Activated CD4-positive, alpha-beta T cell treated with anti-CD3 and anti-CD28 coated beads for 36 hours (primary cell): ENCODE measurements at regions of chr2 and their contacts with region 1.

Region 1: DNA sequence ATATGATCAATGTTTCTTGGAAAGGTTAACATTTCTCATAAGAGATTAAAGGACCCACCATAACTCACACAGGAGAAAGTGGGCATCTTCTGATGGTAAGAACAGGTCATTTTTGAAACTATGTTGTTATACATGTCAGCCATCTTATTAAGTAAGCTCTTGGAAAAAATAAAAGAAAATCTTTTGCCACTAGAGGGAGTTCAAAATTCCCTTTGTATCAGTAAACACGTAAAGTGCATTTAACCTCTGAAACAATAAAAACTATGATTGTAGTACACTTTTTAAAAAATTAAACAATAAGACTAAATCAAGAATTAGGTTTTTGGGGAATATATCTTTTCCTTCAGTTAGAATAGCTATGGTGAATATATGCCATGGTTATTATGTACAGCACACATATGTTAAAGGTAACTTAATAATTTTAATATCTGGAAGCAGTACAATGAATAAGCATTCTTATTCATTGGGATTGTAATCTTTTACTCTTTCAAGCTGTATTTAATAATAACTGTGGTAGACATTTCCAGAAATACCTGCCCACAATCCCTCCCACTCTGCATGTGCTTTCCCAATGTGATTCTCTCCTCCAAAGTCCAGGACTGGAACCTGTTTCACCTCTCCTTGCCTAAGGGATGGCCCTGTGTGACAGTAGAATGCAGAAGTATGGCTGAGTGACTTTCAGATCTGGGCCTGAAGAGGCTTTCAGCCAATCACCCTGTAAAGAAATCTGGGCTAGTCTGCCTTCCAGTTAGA is 64.2 kb downstream of the RBMS1 start:
- DNase-seq: no peak
- ATAC-seq: peak; percentile 24
- H3K4me3 Mint-ChIP-seq: no peak overlapping the region
- H3K27ac Mint-ChIP-seq: peak overlapping the region; percentile 69
- H3K4me1 Mint-ChIP-seq: peaks cover 61% of the 10 kb centered on the region
- H3K27me3 Mint-ChIP-seq: no peaks in the 10 kb centered on the region

Region 2: GRCh38 chr2:160417745-160418397 is 11.6 kb before region 1 on chr2:
- CTCF ChIA-PET with region 1: interaction called, 25 read pairs
- POLR2A ChIA-PET with region 1: no interaction called
- intact Hi-C with region 1: no loop called
- DNase-seq: peak; percentile 50
- ATAC-seq: peak; percentile 92
- H3K4me3 Mint-ChIP-seq: peak overlapping the region; percentile 6
- H3K27ac Mint-ChIP-seq: peak overlapping the region; percentile 88
- H3K4me1 Mint-ChIP-seq: peaks cover 80% of the 10 kb centered on the region
- H3K27me3 Mint-ChIP-seq: no peaks in the 10 kb centered on the region

Region 3: GRCh38 chr2:160482673-160483072 is 53.2 kb after region 1 on chr2:
- CTCF ChIA-PET with region 1: interaction called, 13 read pairs
- POLR2A ChIA-PET with region 1: no interaction called
- intact Hi-C with region 1: no loop called
- DNase-seq: peak; percentile 30
- ATAC-seq: peak; percentile 79
- H3K4me3 Mint-ChIP-seq: peak overlapping the region; percentile 50
- H3K27ac Mint-ChIP-seq: peak overlapping the region; percentile 84
- H3K4me1 Mint-ChIP-seq: peaks cover 78% of the 10 kb centered on the region
- H3K27me3 Mint-ChIP-seq: no peaks in the 10 kb centered on the region

Region 4: GRCh38 chr2:160590664-160591063 is 161.2 kb after region 1 on chr2:
- CTCF ChIA-PET with region 1: no interaction called
- POLR2A ChIA-PET with region 1: no interaction called
- intact Hi-C with region 1: loop called in 1 of 2 experiments (anchors 10 kb)
- DNase-seq: no peak
- ATAC-seq: no peak
- H3K4me3 Mint-ChIP-seq: no peak overlapping the region
- H3K27ac Mint-ChIP-seq: no peak overlapping the region
- H3K4me1 Mint-ChIP-seq: peaks cover 3% of the 10 kb centered on the region
- H3K27me3 Mint-ChIP-seq: no peaks in the 10 kb centered on the region

Region 5: DNA sequence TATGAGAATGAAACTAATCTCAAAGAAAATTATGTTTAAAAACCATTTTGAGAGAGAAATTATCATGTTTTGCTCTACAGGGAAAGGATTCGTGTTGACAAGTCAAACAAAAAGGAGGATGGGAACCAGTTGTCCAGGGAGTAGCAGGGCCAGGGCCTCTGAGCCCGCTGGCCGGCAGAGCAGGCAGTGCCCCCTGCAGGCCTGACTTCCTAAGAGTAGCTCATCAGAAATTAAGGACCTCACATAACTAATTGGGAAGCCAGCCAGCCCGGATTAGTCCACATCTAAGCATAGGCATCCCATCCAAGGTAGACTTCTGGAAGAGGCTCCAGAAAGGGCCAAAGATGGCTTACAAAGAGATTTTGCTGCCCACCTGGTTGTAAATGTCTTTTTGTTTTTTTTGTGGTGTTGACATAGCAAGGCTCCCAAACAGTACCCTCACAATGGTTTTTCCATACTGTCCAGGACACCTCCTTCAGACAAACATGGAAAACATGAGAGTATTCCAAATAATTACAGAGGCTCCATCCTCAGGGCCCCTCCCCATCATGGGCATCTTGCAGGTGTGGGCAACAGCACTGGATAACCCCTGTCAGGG is 489.6 kb after region 1 on chr2:
- CTCF ChIA-PET with region 1: no interaction called
- POLR2A ChIA-PET with region 1: no interaction called
- intact Hi-C with region 1: loop called in 1 of 2 experiments (anchors 10 kb)
- DNase-seq: peak; percentile 65
- ATAC-seq: no peak
- H3K4me3 Mint-ChIP-seq: no peak overlapping the region
- H3K27ac Mint-ChIP-seq: no peak overlapping the region
- H3K4me1 Mint-ChIP-seq: no peaks in the 10 kb centered on the region
- H3K27me3 Mint-ChIP-seq: no peaks in the 10 kb centered on the region